MCF 10A (cell line): ENCODE measurements at regions of chr10 and their contacts with region 1.

Region 1: GRCh38 chr10:73625884-73626752 is 15.2 kb downstream of the MYOZ1 start:
- DNase-seq: peak; percentile 98
- H3K4me3 Mint-ChIP-seq: peak overlapping the region; percentile 95
- H3K27ac Mint-ChIP-seq: peak overlapping the region; percentile 100
- H3K4me1 Mint-ChIP-seq: peaks cover 8% of the 10 kb centered on the region
- H3K27me3 Mint-ChIP-seq: no peaks in the 10 kb centered on the region
- CTCF ChIP-seq: no peak

Region 2: GRCh38 chr10:73495884-73496674 is 130.0 kb before region 1 on chr10 and contains the start of gene PPP3CB:
- CTCF ChIA-PET with region 1: no interaction called
- POLR2A ChIA-PET with region 1: interaction called, 13 read pairs
- intact Hi-C with region 1: no loop called
- DNase-seq: peak; percentile 95
- H3K4me3 Mint-ChIP-seq: peak within 1 kb of the TSS; percentile 86
- H3K27ac Mint-ChIP-seq: peak within 1 kb of the TSS; percentile 74
- H3K4me1 Mint-ChIP-seq: peaks cover 28% of the 10 kb centered on the region
- H3K27me3 Mint-ChIP-seq: no peaks in the 10 kb centered on the region
- CTCF ChIP-seq: no peak
- total RNA-seq, gene PPP3CB: 34.8 and 37.4 TPM in 2 replicates

Region 3: GRCh38 chr10:73576178-73576889 is 49.8 kb before region 1 on chr10:
- CTCF ChIA-PET with region 1: interaction called, 3 read pairs
- POLR2A ChIA-PET with region 1: interaction called, 43 read pairs
- intact Hi-C with region 1: no loop called
- DNase-seq: peak; percentile 89
- H3K4me3 Mint-ChIP-seq: peak overlapping the region; percentile 72
- H3K27ac Mint-ChIP-seq: peak overlapping the region; percentile 85
- H3K4me1 Mint-ChIP-seq: peaks cover 30% of the 10 kb centered on the region
- H3K27me3 Mint-ChIP-seq: no peaks in the 10 kb centered on the region
- CTCF ChIP-seq: no peak

Region 4: GRCh38 chr10:73591935-73592699 is 34.0 kb before region 1 on chr10:
- CTCF ChIA-PET with region 1: no interaction called
- POLR2A ChIA-PET with region 1: interaction called, 16 read pairs
- intact Hi-C with region 1: no loop called
- DNase-seq: peak; percentile 67
- H3K4me3 Mint-ChIP-seq: no peak overlapping the region
- H3K27ac Mint-ChIP-seq: peak overlapping the region; percentile 92
- H3K4me1 Mint-ChIP-seq: peaks cover 24% of the 10 kb centered on the region
- H3K27me3 Mint-ChIP-seq: no peaks in the 10 kb centered on the region
- CTCF ChIP-seq: no peak

Region 5: GRCh38 chr10:73609116-73609515 is 17.0 kb before region 1 on chr10:
- CTCF ChIA-PET with region 1: interaction called, 7 read pairs
- POLR2A ChIA-PET with region 1: interaction called, 13 read pairs
- intact Hi-C with region 1: no loop called
- DNase-seq: no peak
- H3K4me3 Mint-ChIP-seq: no peak overlapping the region
- H3K27ac Mint-ChIP-seq: no peak overlapping the region
- H3K4me1 Mint-ChIP-seq: no peaks in the 10 kb centered on the region
- H3K27me3 Mint-ChIP-seq: no peaks in the 10 kb centered on the region
- CTCF ChIP-seq: no peak